GM12878 (cell line): ENCODE measurements at regions of chr7 and their contacts with region 1.

Region 1: DNA sequence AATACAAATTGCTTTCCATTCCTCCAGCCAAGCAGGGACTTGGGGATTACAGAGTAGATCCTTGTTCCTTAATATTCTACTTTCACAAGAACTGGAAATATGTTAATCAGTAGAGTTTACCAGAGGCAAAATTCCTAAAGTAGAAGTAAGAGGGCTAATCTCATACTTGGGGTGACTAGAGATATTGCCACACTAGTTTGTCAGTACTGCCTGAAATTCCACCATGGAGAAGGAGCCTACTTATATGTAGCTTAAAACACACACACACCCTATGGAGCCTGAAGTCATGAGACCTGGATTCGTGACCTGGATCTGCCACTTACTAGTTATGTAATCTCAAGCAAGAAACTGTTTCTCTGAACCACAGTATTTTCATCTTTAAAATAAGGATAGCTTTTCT is 33.9 kb downstream of the STRIP2 start:
- DNase-seq: no peak
- ATAC-seq: no peak
- H3K4me3 ChIP-seq: no peak overlapping the region
- H3K27ac ChIP-seq: no peak overlapping the region
- H3K4me1 ChIP-seq: no peaks in the 10 kb centered on the region
- H3K27me3 ChIP-seq: no peaks in the 10 kb centered on the region
- CTCF ChIP-seq: no peak
- EP300 ChIP-seq: no peak
- POLR2A ChIP-seq: no peak
- RAD21 ChIP-seq: no peak

Region 2: DNA sequence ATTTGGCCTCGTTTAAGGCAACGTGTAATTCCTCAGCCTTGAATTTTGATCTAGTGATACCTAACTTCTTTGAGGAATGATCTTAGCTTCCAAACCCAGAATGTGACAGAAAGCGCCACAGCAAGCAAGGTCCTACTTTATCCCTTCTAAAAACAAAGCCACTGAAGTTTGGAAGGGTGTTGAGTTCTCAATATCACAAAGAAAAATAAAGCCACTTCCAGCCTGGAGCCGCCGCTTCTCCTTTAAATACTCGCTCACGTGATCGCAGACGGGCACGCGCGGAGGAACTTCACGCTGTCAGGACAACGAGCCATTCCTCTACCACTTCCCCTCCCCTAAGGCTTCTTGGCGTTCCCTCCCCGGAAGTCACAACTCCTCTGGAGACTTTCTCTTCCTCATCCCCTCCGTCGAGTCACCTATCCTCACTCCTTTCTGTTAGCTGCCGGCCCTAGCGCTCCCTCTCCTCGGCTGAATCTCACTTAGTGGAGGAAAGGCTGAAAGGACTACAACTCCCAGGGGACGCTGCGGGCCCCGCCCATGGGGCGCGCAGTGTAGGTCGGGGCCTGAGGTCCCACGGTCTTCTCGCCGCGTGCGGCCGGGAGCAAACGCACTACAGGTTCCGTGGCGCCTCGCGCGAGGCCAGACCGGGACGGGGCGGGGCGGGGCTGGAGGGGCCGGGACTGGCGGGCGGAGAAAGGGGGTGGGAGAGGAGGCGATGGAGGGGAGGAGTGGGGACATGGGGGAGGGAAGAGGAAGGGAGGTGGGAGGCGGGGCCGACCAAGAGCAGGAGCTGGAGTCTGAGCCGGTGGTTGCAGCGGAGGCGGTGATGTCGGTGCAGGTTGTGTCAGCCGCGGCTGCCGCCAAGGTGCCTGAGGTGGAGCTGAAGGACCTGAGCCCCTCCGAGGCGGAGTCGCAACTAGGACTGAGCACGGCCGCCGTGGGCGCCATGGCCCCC is 243.6 kb before region 1 on chr7 and contains the start of gene AHCYL2:
- CTCF ChIA-PET with region 1: interaction called, 42 read pairs
- POLR2A ChIA-PET with region 1: no interaction called
- RAD21 ChIA-PET with region 1: interaction called, 6 read pairs
- SMC1A ChIA-PET with region 1: interaction called, 8 read pairs
- in situ Hi-C with region 1: no loop called
- intact Hi-C with region 1: no loop called
- DNase-seq: peak; percentile 89
- ATAC-seq: peak; percentile 97
- H3K4me3 ChIP-seq: peak within 1 kb of the TSS; percentile 72
- H3K27ac ChIP-seq: peak within 1 kb of the TSS; percentile 71
- H3K4me1 ChIP-seq: peaks cover 8% of the 10 kb centered on the region; the same call in 1 of the 2 replicates
- H3K27me3 ChIP-seq: no peaks in the 10 kb centered on the region
- CTCF ChIP-seq: no peak
- EP300 ChIP-seq: no peak
- POLR2A ChIP-seq: peak; percentile 90
- RAD21 ChIP-seq: no peak
- polyA plus RNA-seq, gene AHCYL2: 1.7 to 2.0 TPM

Region 3: DNA sequence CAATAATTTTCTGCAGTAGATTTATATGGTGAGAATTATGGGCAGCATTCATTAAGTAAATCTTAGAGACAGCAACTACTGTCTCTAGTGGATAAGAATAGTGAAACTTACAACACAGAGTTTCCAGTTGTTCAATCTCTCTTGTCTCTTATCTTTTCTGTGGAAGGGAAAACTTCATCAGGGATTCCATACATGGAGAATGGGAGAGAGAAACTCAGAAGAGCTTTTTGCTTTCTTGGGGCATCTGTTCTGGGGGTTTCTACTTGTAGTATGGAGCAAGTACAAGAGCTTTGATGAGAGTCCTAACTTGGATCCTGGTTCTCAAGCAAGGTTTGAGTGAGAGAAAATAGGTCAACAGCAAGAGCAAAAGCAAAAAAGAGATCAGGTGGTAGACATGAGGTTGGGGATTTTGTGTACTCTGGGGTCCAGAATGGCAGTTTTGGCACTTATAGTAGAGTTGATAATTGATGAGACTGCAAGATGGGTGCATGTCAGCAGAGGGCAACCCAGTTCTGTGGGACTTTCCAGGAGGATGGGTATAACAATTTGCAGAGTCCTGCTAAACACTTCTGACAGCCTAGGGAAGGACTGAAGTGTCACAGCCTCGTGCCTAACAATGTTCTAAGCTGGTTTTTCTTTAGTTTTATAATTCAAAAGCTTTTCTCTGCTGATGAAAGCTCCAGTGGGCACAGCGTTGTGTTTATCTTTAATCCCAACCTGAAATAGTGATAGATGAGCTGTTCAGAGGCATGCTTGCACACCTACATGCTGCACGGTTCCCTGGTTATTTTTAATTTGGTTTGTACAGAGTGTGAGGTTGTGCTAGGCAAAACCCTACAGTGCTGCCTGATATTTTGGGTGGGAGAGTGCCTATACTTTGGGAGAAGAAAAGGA is 65.9 kb before region 1 on chr7:
- CTCF ChIA-PET with region 1: interaction called, 83 read pairs
- POLR2A ChIA-PET with region 1: interaction called, 4 read pairs
- RAD21 ChIA-PET with region 1: interaction called, 25 read pairs
- SMC1A ChIA-PET with region 1: interaction called, 32 read pairs
- in situ Hi-C with region 1: no loop called
- intact Hi-C with region 1: loop called (anchors 2 kb)
- DNase-seq: peak; percentile 43
- ATAC-seq: peak; percentile 93
- H3K4me3 ChIP-seq: no peak overlapping the region
- H3K27ac ChIP-seq: peak overlapping the region; percentile 18; the same call in 1 of the 2 replicates
- H3K4me1 ChIP-seq: no peaks in the 10 kb centered on the region
- H3K27me3 ChIP-seq: no peaks in the 10 kb centered on the region
- CTCF ChIP-seq: peak; percentile 34 to 64 (median 37); a peak in 4 of 6 replicates
- EP300 ChIP-seq: peak; percentile 29 to 59; a peak in 2 of 4 replicates
- POLR2A ChIP-seq: no peak
- RAD21 ChIP-seq: peak; percentile 46

Region 4: DNA sequence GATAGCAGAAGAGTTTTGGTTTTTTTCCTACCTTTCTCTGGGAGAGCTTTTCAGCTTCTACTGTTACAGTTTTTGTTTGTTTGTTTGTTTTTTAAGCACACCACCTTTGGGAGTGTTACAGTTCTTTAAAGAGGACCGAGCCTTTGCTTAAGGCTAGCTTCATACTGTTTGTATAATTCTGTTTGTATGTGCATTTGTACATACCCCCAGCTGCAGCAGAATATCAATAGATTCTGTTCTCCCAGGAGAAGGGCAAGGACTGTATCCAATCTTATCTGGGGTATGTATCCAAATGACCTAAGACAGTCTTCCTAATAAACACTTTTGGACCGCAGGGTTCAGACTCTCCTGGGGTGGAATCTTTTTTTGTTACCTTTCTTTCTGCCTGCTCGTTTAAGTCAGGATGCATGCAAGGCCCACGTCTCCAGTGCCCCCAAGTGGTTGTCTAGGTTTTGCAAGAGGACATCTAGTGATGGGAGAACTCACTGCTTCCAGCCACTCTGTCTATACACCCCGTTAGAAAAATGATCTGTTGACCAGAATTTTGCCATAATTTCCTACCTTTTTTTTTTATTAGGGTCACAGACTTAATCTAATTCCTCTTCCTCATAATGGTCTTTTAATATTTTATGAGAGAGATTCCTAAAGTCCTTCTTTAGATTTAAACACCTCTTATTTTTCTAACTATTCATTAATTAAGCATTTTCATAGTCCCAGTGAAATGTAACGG is 167.4 kb after region 1 on chr7:
- CTCF ChIA-PET with region 1: interaction called, 16 read pairs
- POLR2A ChIA-PET with region 1: no interaction called
- RAD21 ChIA-PET with region 1: interaction called, 4 read pairs
- SMC1A ChIA-PET with region 1: interaction called, 5 read pairs
- in situ Hi-C with region 1: no loop called
- intact Hi-C with region 1: no loop called
- DNase-seq: peak; percentile 47
- ATAC-seq: peak; percentile 100
- H3K4me3 ChIP-seq: no peak overlapping the region
- H3K27ac ChIP-seq: no peak overlapping the region
- H3K4me1 ChIP-seq: peaks cover 7% of the 10 kb centered on the region
- H3K27me3 ChIP-seq: no peaks in the 10 kb centered on the region
- CTCF ChIP-seq: peak; percentile 85 to 89 (median 89)
- EP300 ChIP-seq: no peak
- POLR2A ChIP-seq: no peak
- RAD21 ChIP-seq: peak; percentile 85

Region 5: DNA sequence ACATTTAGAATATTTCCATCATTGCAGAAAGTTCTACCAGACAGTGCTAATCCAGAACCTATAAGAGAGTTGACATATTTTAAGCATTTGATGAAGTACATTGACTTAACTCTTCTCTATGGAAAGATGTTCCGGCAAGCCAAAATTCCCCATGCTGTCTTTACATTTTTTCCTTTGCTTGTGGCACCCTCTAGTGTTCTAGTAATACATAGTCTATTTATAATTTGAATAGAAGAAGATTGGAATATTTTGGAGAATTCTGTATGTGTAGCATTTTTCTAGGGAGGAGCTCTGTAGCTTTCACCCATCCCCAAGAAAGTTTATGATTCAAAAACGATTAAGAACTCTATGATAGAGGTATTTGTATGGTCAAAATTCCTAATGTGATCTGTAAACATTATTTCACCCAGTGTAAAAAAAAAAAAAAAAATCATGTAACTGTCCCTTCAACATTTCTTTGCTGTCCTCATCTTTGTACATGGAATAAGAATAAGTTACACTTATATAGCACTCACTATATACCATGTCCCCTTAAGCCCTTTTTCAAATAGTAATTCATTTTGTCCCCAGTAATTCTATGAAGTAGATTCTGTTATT is 176.6 kb after region 1 on chr7:
- CTCF ChIA-PET with region 1: interaction called, 12 read pairs
- POLR2A ChIA-PET with region 1: no interaction called
- RAD21 ChIA-PET with region 1: interaction called, 3 read pairs
- SMC1A ChIA-PET with region 1: interaction called, 6 read pairs
- in situ Hi-C with region 1: no loop called
- intact Hi-C with region 1: no loop called
- DNase-seq: no peak
- ATAC-seq: no peak
- H3K4me3 ChIP-seq: no peak overlapping the region
- H3K27ac ChIP-seq: no peak overlapping the region
- H3K4me1 ChIP-seq: peaks cover 5% of the 10 kb centered on the region; the same call in 1 of the 2 replicates
- H3K27me3 ChIP-seq: no peaks in the 10 kb centered on the region
- CTCF ChIP-seq: peak; percentile 7 to 42 (median 28); a peak in 3 of 6 replicates
- EP300 ChIP-seq: no peak
- POLR2A ChIP-seq: no peak
- RAD21 ChIP-seq: peak; percentile 49

Region 6: DNA sequence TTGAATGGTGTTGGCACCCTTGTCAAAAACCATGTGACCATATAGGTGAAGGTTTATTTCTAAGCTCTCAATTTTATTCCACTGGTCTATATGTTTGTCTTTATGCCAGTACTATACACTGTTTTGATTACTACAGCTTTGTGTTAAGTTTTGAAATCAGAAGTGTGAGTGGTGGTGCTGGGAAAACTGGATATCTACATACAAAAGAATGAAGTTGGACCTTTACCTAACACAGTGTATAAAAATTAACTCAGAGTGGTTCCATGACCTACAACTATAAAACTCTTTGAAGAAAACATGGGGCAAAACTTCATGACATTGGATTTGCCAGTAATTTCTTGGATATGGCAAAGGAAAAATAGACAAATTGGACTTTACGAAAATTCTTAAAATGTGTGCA is 255.6 kb after region 1 on chr7:
- CTCF ChIA-PET with region 1: no interaction called
- POLR2A ChIA-PET with region 1: no interaction called
- RAD21 ChIA-PET with region 1: no interaction called
- SMC1A ChIA-PET with region 1: no interaction called
- in situ Hi-C with region 1: no loop called
- intact Hi-C with region 1: no loop called
- DNase-seq: no peak
- ATAC-seq: no peak
- H3K4me3 ChIP-seq: no peak overlapping the region
- H3K27ac ChIP-seq: no peak overlapping the region
- H3K4me1 ChIP-seq: no peaks in the 10 kb centered on the region
- H3K27me3 ChIP-seq: no peaks in the 10 kb centered on the region
- CTCF ChIP-seq: no peak
- EP300 ChIP-seq: no peak
- POLR2A ChIP-seq: no peak
- RAD21 ChIP-seq: no peak

Region 7: DNA sequence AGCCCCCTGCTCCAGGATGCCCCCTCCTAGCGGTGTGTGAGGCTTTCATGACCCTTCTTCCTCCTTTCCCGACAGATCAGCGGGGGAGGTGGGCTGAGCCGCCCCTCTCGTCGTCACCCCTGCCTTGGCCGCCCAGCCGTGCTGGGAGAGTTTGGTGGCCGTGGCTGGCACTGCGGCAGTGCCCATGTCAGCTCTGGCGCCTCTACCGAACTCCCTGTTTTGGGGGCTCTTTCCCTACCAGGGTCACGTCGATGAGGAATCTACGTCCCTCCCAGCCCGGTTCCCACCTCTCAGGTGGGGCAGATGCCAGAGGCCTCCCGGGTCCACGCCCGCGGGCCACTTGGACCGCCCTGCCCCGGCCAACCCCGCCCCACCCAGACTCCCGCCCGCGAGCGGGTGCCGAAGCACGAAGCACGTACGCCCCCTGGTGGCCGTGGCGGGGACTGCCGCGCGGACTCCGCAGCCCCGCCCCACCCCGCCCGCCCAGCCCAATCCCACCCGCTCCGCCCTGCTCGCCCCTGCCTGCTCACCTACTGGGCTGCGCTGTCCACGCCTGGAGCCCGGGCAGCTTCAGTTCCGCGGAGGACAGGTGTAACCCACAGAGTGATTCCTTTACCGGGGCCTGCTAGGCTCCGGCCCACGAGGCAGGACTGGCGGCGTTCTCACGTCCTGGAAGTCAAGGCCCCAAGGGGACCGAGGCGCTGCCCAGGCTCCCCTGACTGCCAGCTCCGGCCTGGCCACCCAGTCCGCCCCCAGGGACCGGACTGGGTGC is 357.6 kb after region 1 on chr7:
- CTCF ChIA-PET with region 1: interaction called, 3 read pairs
- POLR2A ChIA-PET with region 1: no interaction called
- RAD21 ChIA-PET with region 1: interaction called, 3 read pairs
- SMC1A ChIA-PET with region 1: no interaction called
- in situ Hi-C with region 1: no loop called
- intact Hi-C with region 1: loop called (anchors 10 kb)
- DNase-seq: no peak
- ATAC-seq: peak; percentile 88
- H3K4me3 ChIP-seq: peak overlapping the region; percentile 79
- H3K27ac ChIP-seq: no peak overlapping the region
- H3K4me1 ChIP-seq: peaks cover 4% of the 10 kb centered on the region
- H3K27me3 ChIP-seq: no peaks in the 10 kb centered on the region
- CTCF ChIP-seq: peak; percentile 37 to 72 (median 70); a peak in 4 of 6 replicates
- EP300 ChIP-seq: no peak
- POLR2A ChIP-seq: peak; percentile 61; the same call in 1 of the 2 replicates
- RAD21 ChIP-seq: peak; percentile 77